Body of pancreas (tissue), 4 donors: ENCODE measurements at regions of chr14 and their contacts with region 1.

Region 1: GRCh38 chr14:73785873-73786695 is 65.5 kb upstream of the PTGR2 start:
- DNase-seq: peak; percentile 71 to 88 (median 80)
- ATAC-seq: peak; percentile 64
- H3K4me3 ChIP-seq: peak overlapping the region; percentile 33 to 38
- H3K27ac ChIP-seq: peak overlapping the region; percentile 86 to 96 (median 96)
- H3K4me1 ChIP-seq: peaks cover 50% of the 10 kb centered on the region
- H3K27me3 ChIP-seq: no peaks in the 10 kb centered on the region
- CTCF ChIP-seq: peak in 5 of 7 experiments; percentile 23 to 58 (median 40)
- POLR2A ChIP-seq: peak; percentile 63 to 84 (median 82)

Region 2: GRCh38 chr14:73741386-73741875 is 44.7 kb before region 1 on chr14:
- intact Hi-C with region 1: loop called (anchors 5 kb)
- DNase-seq: peak in 3 of 4 donors; percentile 50 to 64 (median 58)
- ATAC-seq: peak; percentile 38
- H3K4me3 ChIP-seq: no peak overlapping the region
- H3K27ac ChIP-seq: peak overlapping the region; percentile 57 to 78 (median 73)
- H3K4me1 ChIP-seq: peaks cover 77% of the 10 kb centered on the region
- H3K27me3 ChIP-seq: no peaks in the 10 kb centered on the region
- CTCF ChIP-seq: no peak
- POLR2A ChIP-seq: no peak

Region 3: GRCh38 chr14:73759714-73760597 is 26.1 kb before region 1 on chr14:
- intact Hi-C with region 1: loop called (anchors 5 kb)
- DNase-seq: peak; percentile 96 to 98 (median 98)
- ATAC-seq: peak; percentile 84
- H3K4me3 ChIP-seq: no peak overlapping the region
- H3K27ac ChIP-seq: peak overlapping the region; percentile 96 to 100 (median 100)
- H3K4me1 ChIP-seq: peaks cover 87% of the 10 kb centered on the region
- H3K27me3 ChIP-seq: no peaks in the 10 kb centered on the region
- CTCF ChIP-seq: peak in 4 of 7 experiments; percentile 7 to 30 (median 25)
- POLR2A ChIP-seq: peak; percentile 95 to 98 (median 96)